ENCODE measurements at regions of chr9 and their contacts with region 1.

Region 1: DNA sequence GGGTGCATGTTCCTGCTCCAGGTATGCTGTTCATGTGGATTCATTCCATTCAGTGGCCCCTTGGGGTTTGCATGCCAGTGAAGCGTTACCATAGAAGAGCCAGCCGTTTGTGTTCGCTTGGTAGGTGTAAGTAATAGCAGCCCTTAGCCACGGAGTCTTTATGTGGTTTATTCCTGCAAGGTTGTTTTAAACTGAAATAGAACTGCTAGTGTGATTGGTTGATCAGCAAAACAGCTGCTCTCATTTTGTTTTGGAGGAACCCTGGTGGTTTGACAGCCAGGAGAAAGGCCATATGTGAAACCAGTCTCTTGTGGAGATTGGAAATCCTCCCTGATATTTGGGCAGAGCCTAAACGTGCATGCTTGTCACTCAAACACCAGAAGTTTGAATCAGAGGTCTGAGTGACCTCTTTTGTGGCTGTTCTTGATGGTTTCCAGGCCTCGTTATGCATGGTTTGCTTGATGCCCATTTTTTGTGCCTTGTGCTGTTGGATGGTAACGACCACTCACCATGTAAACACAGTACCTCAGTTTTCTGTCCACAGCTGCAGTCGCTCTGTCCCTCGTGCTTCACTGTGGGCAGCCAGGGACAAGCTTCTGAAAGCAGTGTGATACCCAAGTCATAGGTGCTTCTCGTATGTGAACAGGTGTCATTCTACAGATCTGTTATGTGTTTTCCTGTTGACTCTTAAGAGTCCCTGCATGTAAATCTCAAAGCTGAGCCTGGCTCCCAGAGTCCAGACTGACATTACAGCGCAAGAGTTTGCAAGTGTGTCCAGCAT is 58.3 kb upstream of the NXNL2 start:
- DNase-seq: peak; percentile 28
- ATAC-seq: peak; percentile 8; the same call in 1 of the 2 replicates
- H3K4me3 ChIP-seq: no peak overlapping the region
- H3K27ac ChIP-seq: peak overlapping the region; percentile 84
- H3K4me1 ChIP-seq: peaks cover 19% of the 10 kb centered on the region
- H3K27me3 ChIP-seq: no peaks in the 10 kb centered on the region
- CTCF ChIP-seq: no peak
- POLR2A ChIP-seq: no peak
- RAD21 ChIP-seq: no peak

Region 2: DNA sequence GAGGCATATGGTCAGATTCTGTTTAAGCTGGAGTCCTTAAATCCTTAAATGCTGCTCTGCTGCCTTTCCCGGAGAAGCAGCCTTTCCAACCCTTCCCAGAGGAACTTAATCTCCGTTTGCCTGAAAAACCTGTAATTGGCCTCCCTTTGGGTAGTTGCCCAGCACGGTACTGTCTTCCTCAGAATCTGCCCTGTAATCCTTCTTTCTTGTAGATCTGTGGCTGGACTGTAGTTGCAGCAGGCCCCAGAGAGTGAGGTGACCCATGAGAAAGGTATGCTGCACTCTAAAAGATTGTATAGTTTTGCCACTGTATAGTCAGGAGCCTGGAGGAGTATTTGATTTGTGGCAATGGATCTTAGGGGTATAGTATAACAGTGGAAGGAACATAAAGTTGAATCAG is 76.7 kb before region 1 on chr9:
- CTCF ChIA-PET with region 1: no interaction called
- POLR2A ChIA-PET with region 1: no interaction called
- dilution Hi-C with region 1: no loop called
- in situ Hi-C with region 1: no loop called
- intact Hi-C with region 1: loop called (anchors 5 kb)
- DNase-seq: peak; percentile 92
- ATAC-seq: peak; percentile 79
- H3K4me3 ChIP-seq: no peak overlapping the region
- H3K27ac ChIP-seq: peak overlapping the region; percentile 91
- H3K4me1 ChIP-seq: peaks cover 19% of the 10 kb centered on the region
- H3K27me3 ChIP-seq: no peaks in the 10 kb centered on the region
- CTCF ChIP-seq: no peak
- POLR2A ChIP-seq: no peak
- RAD21 ChIP-seq: no peak

Region 3: GRCh38 chr9:88446728-88447127 is 30.0 kb before region 1 on chr9:
- CTCF ChIA-PET with region 1: no interaction called
- POLR2A ChIA-PET with region 1: interaction called, 13 read pairs
- dilution Hi-C with region 1: no loop called
- in situ Hi-C with region 1: no loop called
- intact Hi-C with region 1: no loop called
- DNase-seq: no peak
- ATAC-seq: no peak
- H3K4me3 ChIP-seq: no peak overlapping the region
- H3K27ac ChIP-seq: no peak overlapping the region
- H3K4me1 ChIP-seq: peaks cover 6% of the 10 kb centered on the region
- H3K27me3 ChIP-seq: no peaks in the 10 kb centered on the region
- CTCF ChIP-seq: no peak
- POLR2A ChIP-seq: no peak
- RAD21 ChIP-seq: no peak

Region 4: DNA sequence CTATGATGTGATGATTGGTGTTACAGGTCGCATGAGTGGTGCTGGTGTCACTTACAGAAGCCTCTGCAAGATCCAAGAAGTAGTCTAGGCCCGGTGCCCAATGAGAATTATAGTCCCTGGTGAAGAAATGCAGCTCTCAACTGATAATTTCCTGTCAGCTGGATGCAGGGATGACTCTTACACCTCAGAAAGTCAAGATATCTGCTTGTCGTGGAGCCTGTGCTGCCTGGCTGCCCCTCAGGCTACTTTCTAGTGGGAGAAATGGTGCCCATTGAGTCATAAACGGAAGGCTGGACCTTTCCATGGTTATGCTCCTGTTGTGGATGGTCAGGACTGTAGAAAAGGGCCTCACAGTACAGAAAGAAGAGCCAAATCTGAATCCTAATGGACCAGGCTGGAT is 11.5 kb after region 1 on chr9:
- CTCF ChIA-PET with region 1: no interaction called
- POLR2A ChIA-PET with region 1: interaction called, 20 read pairs
- dilution Hi-C with region 1: no loop called
- in situ Hi-C with region 1: no loop called
- intact Hi-C with region 1: no loop called
- DNase-seq: no peak
- ATAC-seq: no peak
- H3K4me3 ChIP-seq: no peak overlapping the region
- H3K27ac ChIP-seq: no peak overlapping the region
- H3K4me1 ChIP-seq: no peaks in the 10 kb centered on the region
- H3K27me3 ChIP-seq: no peaks in the 10 kb centered on the region
- CTCF ChIP-seq: no peak
- POLR2A ChIP-seq: no peak
- RAD21 ChIP-seq: no peak

Measured in IMR-90 (cell line).